PC-9 (cell line): ENCODE measurements at regions of chr2 and their contacts with region 1.

Region 1: GRCh38 chr2:219218732-219219701 is at the start of gene ABCB6:
- DNase-seq: peak; percentile 67 to 91
- H3K4me3 ChIP-seq: peak within 1 kb of the TSS; percentile 64
- H3K27ac ChIP-seq: peak within 1 kb of the TSS; percentile 90
- H3K4me1 ChIP-seq: peaks cover 13% of the 10 kb centered on the region
- H3K27me3 ChIP-seq: no peaks in the 10 kb centered on the region
- CTCF ChIP-seq: no peak
- total RNA-seq, gene ABCB6: 33.7 and 41.4 TPM in 2 replicates

Region 2: DNA sequence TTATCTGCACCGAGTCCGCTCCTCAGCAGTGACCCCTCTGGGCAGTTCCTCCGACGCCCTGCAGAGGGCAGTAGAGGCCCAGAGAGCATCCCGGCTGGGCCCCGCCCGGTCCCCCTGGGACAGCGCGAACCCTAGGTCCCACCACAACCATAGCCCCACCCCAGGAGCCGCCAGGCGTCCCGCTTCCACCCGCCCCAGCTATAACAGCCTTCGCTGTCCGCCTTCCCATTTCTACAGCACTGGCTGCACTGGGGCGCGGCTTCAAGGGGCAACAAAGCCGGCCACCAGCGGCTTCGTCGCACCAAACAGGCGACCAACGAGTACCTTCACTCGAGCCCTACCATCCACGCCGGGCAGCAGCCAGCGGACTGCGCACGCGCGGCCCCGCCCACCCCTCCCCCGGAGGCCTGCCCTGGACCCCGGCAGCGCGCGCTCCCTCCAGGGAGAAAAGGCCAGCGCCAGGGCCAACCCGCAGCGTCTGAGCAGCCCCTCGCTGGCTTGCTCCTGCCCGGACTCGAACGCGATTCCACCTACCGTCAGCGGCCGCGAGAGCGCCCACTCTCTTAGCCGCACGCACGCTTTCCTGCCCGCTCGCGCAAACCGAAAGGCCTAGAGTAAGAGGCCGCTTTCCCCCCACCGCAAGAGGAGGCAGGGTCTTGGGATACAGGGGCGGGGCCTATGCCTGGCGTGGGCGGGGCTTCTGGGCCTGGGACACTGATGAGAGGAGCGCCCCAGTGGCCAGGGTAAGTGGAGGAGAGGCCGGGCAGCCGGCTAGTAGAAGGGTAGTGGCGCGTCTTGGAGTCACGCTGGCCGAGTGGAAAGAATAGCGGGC is 58.6 kb before region 1 on chr2 and contains the start of gene NHEJ1:
- CTCF ChIA-PET with region 1: interaction called, 3 read pairs
- POLR2A ChIA-PET with region 1: no interaction called
- intact Hi-C with region 1: loop called (anchors 2 kb)
- DNase-seq: peak; percentile 79 to 95
- H3K4me3 ChIP-seq: peak within 1 kb of the TSS; percentile 72
- H3K27ac ChIP-seq: peak within 1 kb of the TSS; percentile 57
- H3K4me1 ChIP-seq: 0 out of 2 replicates have a peak, but pooled peaks cover 8% of the 10 kb centered on the region
- H3K27me3 ChIP-seq: no peaks in the 10 kb centered on the region
- CTCF ChIP-seq: peak; percentile 96
- total RNA-seq, gene NHEJ1: 9.8 and 11.2 TPM in 2 replicates

Region 3: DNA sequence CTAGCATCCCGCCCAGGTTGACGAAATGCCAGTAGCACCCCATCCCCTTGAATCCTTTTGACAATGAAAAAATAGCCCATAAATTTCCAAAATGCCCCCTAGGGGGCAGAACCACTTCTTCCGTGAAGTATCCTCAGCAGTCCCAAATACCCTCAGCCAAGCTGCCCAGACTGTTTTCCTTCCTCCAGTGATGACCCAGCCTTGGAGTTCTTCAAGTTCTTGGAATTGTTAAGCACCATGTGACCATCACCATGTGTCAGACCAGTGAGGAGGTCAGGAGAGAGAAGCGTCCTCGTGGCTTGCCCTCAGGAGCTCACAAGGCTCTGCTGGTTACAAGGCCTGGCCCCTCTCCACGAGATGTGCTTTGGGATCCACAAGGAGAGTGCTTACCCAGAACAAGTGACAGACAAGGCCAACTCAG is 47.8 kb before region 1 on chr2:
- CTCF ChIA-PET with region 1: interaction called, 13 read pairs
- POLR2A ChIA-PET with region 1: interaction called, 3 read pairs
- intact Hi-C with region 1: no loop called
- DNase-seq: peak in 1 of 2 experiments; percentile 36
- H3K4me3 ChIP-seq: no peak overlapping the region
- H3K27ac ChIP-seq: no peak overlapping the region
- H3K4me1 ChIP-seq: peaks cover 11% of the 10 kb centered on the region
- H3K27me3 ChIP-seq: no peaks in the 10 kb centered on the region
- CTCF ChIP-seq: peak; percentile 82

Region 4: GRCh38 chr2:219229305-219230058 is 10.5 kb after region 1 on chr2 and contains the starts of genes ANKZF1 and ATG9A:
- CTCF ChIA-PET with region 1: no interaction called
- POLR2A ChIA-PET with region 1: no interaction called
- intact Hi-C with region 1: loop called (anchors 1 kb)
- DNase-seq: peak; percentile 97 to 98
- H3K4me3 ChIP-seq: peak within 1 kb of the TSS; percentile 67
- H3K27ac ChIP-seq: peak within 1 kb of the TSS; percentile 77
- H3K4me1 ChIP-seq: peaks cover 16% of the 10 kb centered on the region
- H3K27me3 ChIP-seq: no peaks in the 10 kb centered on the region
- CTCF ChIP-seq: no peak
- total RNA-seq, gene ANKZF1: 62.2 and 65.1 TPM in 2 replicates
- total RNA-seq, gene ATG9A: 56.0 and 64.5 TPM in 2 replicates

Region 5: DNA sequence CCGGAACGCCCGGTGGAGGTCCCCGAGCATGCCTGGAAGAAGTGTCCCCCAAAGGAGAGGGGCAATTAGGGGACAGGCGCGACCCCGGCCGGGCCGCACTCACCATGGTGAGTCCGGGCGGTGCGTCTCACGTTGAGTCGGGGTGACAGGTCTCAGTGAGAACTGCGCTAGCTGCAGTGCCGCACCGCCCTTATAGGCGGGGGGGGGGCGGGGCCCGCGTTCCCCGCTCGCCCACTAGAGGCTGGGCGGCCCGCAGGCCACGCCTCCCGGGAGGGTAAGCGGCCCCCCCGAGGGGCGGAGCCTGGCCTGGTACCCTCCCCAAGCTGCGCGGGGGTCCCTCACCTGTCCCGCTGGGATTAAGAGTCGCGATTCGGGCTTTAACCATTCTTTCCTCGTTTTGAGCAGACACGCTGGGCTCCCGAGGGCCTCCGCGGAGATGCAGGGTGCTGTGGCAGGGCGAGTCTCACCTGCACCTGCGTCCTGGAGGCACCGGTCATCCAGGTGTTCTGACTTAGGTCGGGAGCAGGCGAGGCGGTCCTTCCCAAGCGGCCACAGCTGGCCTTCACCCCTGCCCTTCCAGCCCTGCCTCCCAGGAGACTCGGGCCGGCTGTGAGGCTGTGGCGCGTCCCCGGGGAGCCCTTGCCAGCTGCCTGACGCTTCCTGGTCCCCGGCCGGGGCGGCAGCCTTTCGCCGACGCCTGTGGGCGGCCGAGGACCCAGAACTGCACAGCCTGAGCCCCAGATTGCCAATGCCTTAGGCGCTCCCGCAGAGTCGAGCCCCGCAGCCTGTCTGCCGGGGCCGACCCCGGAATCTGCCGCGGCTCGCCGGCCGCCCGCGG is 35.0 kb after region 1 on chr2 and contains the start of gene TUBA4A:
- CTCF ChIA-PET with region 1: no interaction called
- POLR2A ChIA-PET with region 1: interaction called, 9 read pairs
- intact Hi-C with region 1: loop called (anchors 1 kb)
- DNase-seq: peak; percentile 65 to 87
- H3K4me3 ChIP-seq: peak within 1 kb of the TSS; percentile 87
- H3K27ac ChIP-seq: peak within 1 kb of the TSS; percentile 43
- H3K4me1 ChIP-seq: peaks cover 46% of the 10 kb centered on the region
- H3K27me3 ChIP-seq: no peaks in the 10 kb centered on the region
- CTCF ChIP-seq: no peak
- total RNA-seq, gene TUBA4A: 118 and 157 TPM in 2 replicates